Activated naive CD4-positive, alpha-beta T cell treated with anti-CD3 and anti-CD28 coated beads for 36 hours (primary cell): ENCODE measurements at regions of chr7 and their contacts with region 1.

Region 1: DNA sequence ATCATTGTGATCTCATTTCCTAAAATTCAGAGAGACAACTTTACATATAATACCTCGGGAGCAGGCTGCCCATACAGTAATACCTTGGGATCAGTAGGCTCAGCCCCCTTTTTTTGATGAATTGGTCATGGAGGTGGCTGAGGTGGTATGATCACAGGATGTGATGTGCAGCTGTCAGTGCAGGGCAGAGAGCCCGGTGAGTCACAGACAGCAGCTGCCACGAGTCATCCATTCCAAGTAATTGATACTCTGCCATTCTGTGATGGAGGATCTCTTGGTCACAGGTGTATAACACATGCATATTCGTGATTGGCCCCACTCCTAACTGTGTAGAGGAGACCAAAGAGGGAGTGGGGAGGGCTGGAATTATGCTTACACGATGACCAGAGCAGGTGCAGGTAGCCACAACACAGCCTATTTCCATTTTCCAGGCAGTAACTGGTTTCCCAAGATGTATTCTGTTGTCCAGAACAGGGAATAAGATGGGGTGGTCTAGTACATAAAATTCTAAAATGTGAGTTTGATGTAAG is 14.1 kb downstream of the NRCAM start:
- DNase-seq: peak; percentile 67
- H3K4me3 Mint-ChIP-seq: no peak overlapping the region
- H3K27ac Mint-ChIP-seq: no peak overlapping the region
- H3K4me1 Mint-ChIP-seq: peaks cover 4% of the 10 kb centered on the region
- H3K27me3 Mint-ChIP-seq: peaks cover under 1% of the 10 kb centered on the region

Region 2: DNA sequence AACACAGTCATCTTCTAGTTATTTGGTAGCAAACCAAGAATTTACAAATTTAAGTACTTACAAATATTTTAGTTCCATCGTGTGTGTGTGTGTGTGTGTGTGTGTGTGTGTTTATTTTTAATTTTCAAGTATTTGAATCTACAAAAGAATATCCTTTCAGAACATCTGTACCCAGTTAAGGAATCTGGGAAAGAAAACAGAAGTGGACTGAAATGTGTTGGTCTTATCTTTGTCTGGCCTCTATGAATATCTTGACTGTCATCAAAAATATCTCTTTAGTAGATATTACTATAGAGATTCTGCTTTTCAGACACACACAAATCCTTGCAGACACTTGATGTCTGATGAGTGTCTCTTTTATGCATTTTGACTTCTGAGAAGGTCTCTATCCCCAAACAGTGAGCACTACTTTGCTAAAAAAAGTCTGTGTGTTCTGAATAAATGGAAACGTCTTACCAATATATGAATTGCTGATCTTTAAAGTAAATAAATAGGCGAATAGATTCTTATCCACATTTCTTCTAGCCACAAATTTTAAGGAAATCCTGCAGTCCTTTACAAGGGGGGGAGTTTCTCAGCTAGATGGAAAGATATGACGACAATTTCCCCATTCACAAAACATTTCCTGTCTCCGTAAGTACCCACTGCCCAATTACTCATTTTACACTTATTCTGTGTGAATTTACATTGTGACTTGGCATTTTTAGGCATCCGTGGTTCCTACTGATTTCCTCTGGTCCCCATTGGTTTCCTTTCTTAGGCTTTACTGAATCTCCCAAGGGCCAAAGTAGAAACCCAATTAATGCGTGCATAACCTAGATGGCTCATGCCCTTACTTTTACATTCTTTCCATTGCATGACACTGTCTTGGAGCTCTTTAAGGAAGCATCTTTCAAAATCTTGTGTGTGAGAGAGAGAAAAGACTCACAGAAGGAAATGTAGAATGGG is 21.9 kb before region 1 on chr7:
- CTCF ChIA-PET with region 1: no interaction called
- intact Hi-C with region 1: loop called (anchors 2 kb)
- DNase-seq: no peak
- H3K4me3 Mint-ChIP-seq: no peak overlapping the region
- H3K27ac Mint-ChIP-seq: no peak overlapping the region
- H3K4me1 Mint-ChIP-seq: peaks cover 49% of the 10 kb centered on the region
- H3K27me3 Mint-ChIP-seq: peaks cover 24% of the 10 kb centered on the region

Region 3: GRCh38 chr7:108452722-108453121 is 10.6 kb after region 1 on chr7:
- CTCF ChIA-PET with region 1: no interaction called
- intact Hi-C with region 1: loop called (anchors 1 kb)
- DNase-seq: no peak
- H3K4me3 Mint-ChIP-seq: no peak overlapping the region
- H3K27ac Mint-ChIP-seq: no peak overlapping the region
- H3K4me1 Mint-ChIP-seq: peaks cover 12% of the 10 kb centered on the region
- H3K27me3 Mint-ChIP-seq: peaks cover 33% of the 10 kb centered on the region